Heart left ventricle (tissue), 16 donors: ENCODE measurements at regions of chr13 and their contacts with region 1.

Region 1: GRCh38 chr13:106917673-106918556 is 350.0 kb upstream of the ARGLU1 start:
- DNase-seq: peak; percentile 67 to 88 (median 82)
- ATAC-seq: peak; percentile 85 to 92 (median 88)
- H3K4me3 ChIP-seq: peak overlapping the region; percentile 40 to 73 (median 62)
- H3K27ac ChIP-seq: peak overlapping the region; percentile 86 to 98 (median 94)
- H3K4me1 ChIP-seq: peaks cover 0 to 27% (median 8%) of the 10 kb centered on the region in 12 donors
- H3K27me3 ChIP-seq: peaks cover 0 to 3% (median 0%) of the 10 kb centered on the region in 9 donors
- CTCF ChIP-seq: peak; percentile 88 to 98 (median 93)
- POLR2A ChIP-seq: no peak

Region 2: GRCh38 chr13:106096661-106097092 is 821.2 kb before region 1 on chr13:
- intact Hi-C with region 1: loop called in 1 of 10 experiments (anchors 10 kb)
- DNase-seq: no peak
- ATAC-seq: no peak
- H3K4me3 ChIP-seq: no peak overlapping the region
- H3K27ac ChIP-seq: no peak overlapping the region
- H3K4me1 ChIP-seq: peaks cover 0 to 11% (median 0%) of the 10 kb centered on the region in 12 donors
- H3K27me3 ChIP-seq: peaks cover 0 to 5% (median 0%) of the 10 kb centered on the region in 9 donors
- CTCF ChIP-seq: no peak
- POLR2A ChIP-seq: no peak

Region 3: DNA sequence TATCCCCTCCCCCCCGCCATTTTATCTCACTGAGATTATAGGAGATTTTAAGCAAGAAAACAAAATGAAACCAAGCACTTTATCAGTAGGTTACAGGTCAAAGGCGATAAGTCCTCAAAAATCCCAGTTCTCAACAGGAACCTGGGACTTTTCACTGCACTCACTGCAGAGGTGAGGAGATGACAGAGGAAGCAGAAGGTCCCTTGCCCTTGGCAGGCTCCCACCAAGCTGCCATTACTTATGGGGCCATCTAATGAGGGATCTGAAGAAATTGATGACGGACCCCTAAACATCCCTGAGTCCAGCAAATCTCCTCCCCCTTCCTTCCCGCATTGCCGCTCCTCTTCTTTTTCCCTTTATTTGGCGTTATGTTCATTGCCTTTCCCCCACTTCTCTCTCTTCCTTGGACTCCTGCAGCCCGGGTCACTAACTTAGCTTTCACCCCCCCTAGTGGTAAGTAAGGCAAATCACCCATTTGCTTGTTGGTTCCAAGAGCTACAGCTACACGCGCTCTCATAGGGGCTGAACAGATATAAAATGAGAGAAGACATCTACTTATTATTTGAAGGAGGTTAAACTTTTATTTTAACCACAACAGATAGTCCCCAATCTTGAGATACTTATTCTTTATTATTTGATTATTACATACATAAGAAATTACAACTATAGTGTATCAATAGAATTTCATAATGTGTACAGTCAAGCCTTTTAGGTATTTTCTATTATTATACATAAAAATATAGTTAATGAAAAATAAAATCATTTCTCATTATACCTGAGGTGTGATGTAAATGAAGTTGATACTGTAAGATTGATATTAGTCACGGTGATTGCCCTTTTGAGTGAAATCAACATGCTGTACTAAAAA is 298.0 kb before region 1 on chr13:
- intact Hi-C with region 1: loop called in 5 of 10 experiments (anchors 5 to 10 kb)
- DNase-seq: peak in 2 of 5 donors; percentile 34 to 46
- ATAC-seq: peak; percentile 88 to 93 (median 89)
- H3K4me3 ChIP-seq: peak overlapping the region in 8 of 12 donors; percentile 18 to 38 (median 32)
- H3K27ac ChIP-seq: peak overlapping the region in 8 of 12 donors; percentile 8 to 65 (median 42)
- H3K4me1 ChIP-seq: peaks cover 0 to 20% (median 5%) of the 10 kb centered on the region in 12 donors
- H3K27me3 ChIP-seq: peaks cover 0 to 8% (median 0%) of the 10 kb centered on the region in 9 donors
- CTCF ChIP-seq: peak; percentile 61 to 89 (median 79)
- POLR2A ChIP-seq: no peak

Region 4: GRCh38 chr13:106701771-106702341 is 216.1 kb before region 1 on chr13:
- intact Hi-C with region 1: loop called in 6 of 10 experiments (anchors 1 to 10 kb)
- DNase-seq: peak in 4 of 5 donors; percentile 55 to 65 (median 62)
- ATAC-seq: peak; percentile 74 to 94 (median 83)
- H3K4me3 ChIP-seq: peak overlapping the region in 4 of 12 donors; percentile 5 to 23 (median 15)
- H3K27ac ChIP-seq: peak overlapping the region in 11 of 12 donors; percentile 31 to 83 (median 72)
- H3K4me1 ChIP-seq: peaks cover 0 to 44% (median 6%) of the 10 kb centered on the region in 12 donors
- H3K27me3 ChIP-seq: no peaks in the 10 kb centered on the region
- CTCF ChIP-seq: no peak
- POLR2A ChIP-seq: no peak

Region 5: DNA sequence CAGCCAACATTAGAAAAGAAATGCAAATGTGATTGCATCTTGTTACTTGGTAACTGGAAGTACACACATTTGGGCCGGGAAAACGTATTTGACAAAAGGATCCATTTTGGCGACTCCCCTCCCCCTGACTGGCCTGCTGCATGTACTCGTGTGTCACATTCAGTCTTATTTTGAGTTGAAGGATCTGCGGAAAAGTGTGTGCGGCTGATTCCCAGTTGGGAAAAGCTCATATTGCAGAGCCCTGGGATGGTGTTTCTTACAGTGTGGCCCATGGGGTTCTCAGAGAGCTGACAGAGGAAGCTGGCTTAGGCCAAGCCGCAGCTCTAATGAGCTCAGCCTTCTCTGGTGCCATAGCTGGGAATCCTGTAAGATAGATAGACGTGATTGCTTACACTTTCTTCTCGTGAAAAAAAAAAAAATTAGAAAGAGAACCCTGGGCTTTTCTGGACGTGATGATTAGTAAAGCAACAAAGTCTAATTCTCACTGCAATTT is 179.7 kb before region 1 on chr13:
- intact Hi-C with region 1: no loop called
- DNase-seq: no peak
- ATAC-seq: no peak
- H3K4me3 ChIP-seq: no peak overlapping the region
- H3K27ac ChIP-seq: no peak overlapping the region
- H3K4me1 ChIP-seq: peaks cover 0 to 14% (median 1%) of the 10 kb centered on the region in 12 donors
- H3K27me3 ChIP-seq: no peaks in the 10 kb centered on the region
- CTCF ChIP-seq: no peak
- POLR2A ChIP-seq: no peak

Region 6: GRCh38 chr13:106802976-106803375 is 114.9 kb before region 1 on chr13:
- intact Hi-C with region 1: loop called in 1 of 10 experiments (anchors 10 kb)
- DNase-seq: no peak
- ATAC-seq: no peak
- H3K4me3 ChIP-seq: no peak overlapping the region
- H3K27ac ChIP-seq: no peak overlapping the region
- H3K4me1 ChIP-seq: peaks cover 0 to 11% (median 0%) of the 10 kb centered on the region in 12 donors
- H3K27me3 ChIP-seq: peaks cover 0 to 3% (median 0%) of the 10 kb centered on the region in 9 donors
- CTCF ChIP-seq: no peak
- POLR2A ChIP-seq: no peak

Region 7: DNA sequence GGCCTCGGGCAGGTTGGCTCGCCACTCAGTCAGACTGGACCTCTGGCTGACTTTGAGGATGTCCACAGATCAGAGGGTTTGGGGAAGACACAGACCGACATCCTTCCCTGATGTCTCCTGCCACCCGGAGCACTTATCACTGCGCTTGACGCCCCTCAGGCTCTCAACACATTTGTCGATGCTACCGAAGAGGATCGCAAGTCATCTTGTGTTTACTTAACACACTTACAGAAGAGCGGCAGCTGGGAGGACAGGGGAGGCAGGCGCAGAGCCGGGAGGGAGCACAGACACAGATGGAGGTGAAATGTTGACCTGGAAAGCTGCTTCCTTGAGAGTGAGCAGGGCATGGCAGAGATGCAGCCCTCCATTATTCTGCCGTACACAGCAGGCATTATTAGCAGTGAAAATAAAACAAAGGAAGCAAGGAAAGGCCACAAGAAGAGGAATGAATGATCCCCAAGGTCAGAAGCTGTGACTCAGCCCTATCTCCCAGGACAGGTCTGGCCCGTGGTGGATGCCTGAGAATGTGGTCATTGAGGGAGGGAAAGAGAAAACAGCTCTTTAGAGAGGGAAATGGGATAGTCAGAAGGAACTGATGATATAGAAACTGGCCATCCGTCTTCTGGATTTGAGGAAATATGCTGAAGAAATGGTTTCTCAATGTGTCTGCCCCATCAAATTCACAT is 199.6 kb after region 1 on chr13:
- intact Hi-C with region 1: loop called in 9 of 10 experiments (anchors 5 to 10 kb)
- DNase-seq: no peak
- ATAC-seq: no peak
- H3K4me3 ChIP-seq: no peak overlapping the region
- H3K27ac ChIP-seq: no peak overlapping the region
- H3K4me1 ChIP-seq: no peaks in the 10 kb centered on the region
- H3K27me3 ChIP-seq: peaks cover 0 to 8% (median 0%) of the 10 kb centered on the region in 9 donors
- CTCF ChIP-seq: no peak
- POLR2A ChIP-seq: no peak